ENCODE measurements at regions of chr11 and their contacts with region 1.

Region 1: GRCh38 chr11:11313426-11313825 is 39.6 kb downstream of the CSNK2A3 start:
- DNase-seq: no peak
- H3K4me3 ChIP-seq: no peak overlapping the region
- H3K27ac ChIP-seq: no peak overlapping the region
- H3K4me1 ChIP-seq: no peaks in the 10 kb centered on the region
- H3K27me3 ChIP-seq: 0 out of 7 replicates have a peak, but pooled peaks cover 0 to 2% (median 0%) of the 10 kb centered on the region in 4 experiments
- CTCF ChIP-seq: no peak
- EP300 ChIP-seq: no peak
- POLR2A ChIP-seq: no peak
- RAD21 ChIP-seq: no peak

Region 2: DNA sequence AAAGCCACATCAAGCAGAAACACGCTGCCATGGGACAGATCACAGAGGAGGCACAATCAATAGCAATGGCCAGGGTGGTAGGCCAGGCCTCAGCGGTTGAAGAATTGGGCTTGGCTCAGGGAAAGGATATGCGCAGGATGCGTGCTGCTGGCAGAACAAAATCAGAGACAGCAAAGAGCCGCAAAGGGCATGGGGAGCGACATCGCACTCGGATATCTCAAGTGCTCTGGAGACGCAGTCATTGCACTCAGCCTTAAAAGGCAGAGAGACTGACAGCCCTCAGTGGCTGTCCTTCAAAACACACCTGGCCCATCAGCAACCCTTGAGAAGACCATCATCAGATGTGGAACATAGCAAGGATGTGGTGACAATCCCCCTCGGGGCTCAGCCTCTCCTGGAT is 10.9 kb before region 1 on chr11:
- CTCF ChIA-PET with region 1: interaction called, 12 read pairs
- POLR2A ChIA-PET with region 1: no interaction called
- DNase-seq: no peak
- H3K4me3 ChIP-seq: no peak overlapping the region
- H3K27ac ChIP-seq: no peak overlapping the region
- H3K4me1 ChIP-seq: no peaks in the 10 kb centered on the region
- H3K27me3 ChIP-seq: no peaks in the 10 kb centered on the region
- CTCF ChIP-seq: no peak
- EP300 ChIP-seq: no peak
- POLR2A ChIP-seq: no peak
- RAD21 ChIP-seq: no peak